ENCODE measurements at regions of chr10 and their contacts with region 1.

Region 1: GRCh38 chr10:58384999-58385783 is at the start of gene TFAM:
- DNase-seq: peak; percentile 52
- H3K4me3 ChIP-seq: peak within 1 kb of the TSS; percentile 71
- H3K27me3 ChIP-seq: no peaks in the 10 kb centered on the region
- CTCF ChIP-seq: peak; percentile 59
- polyA plus RNA-seq, gene TFAM: 9.0 and 11.5 TPM in 2 replicates

Region 2: GRCh38 chr10:58209669-58210068 is 175.5 kb before region 1 on chr10:
- CTCF ChIA-PET with region 1: no interaction called
- POLR2A ChIA-PET with region 1: no interaction called
- DNase-seq: no peak
- H3K4me3 ChIP-seq: no peak overlapping the region
- H3K27me3 ChIP-seq: no peaks in the 10 kb centered on the region
- CTCF ChIP-seq: no peak

Region 3: GRCh38 chr10:58400609-58401008 is 15.4 kb after region 1 on chr10:
- CTCF ChIA-PET with region 1: interaction called, 7 read pairs
- POLR2A ChIA-PET with region 1: interaction called, 17 read pairs
- DNase-seq: no peak
- H3K4me3 ChIP-seq: no peak overlapping the region
- H3K27me3 ChIP-seq: no peaks in the 10 kb centered on the region
- CTCF ChIP-seq: no peak